ENCODE measurements at regions of chr7 and their contacts with region 1.

Region 1: GRCh38 chr7:21253740-21254687 is 173.9 kb upstream of the SP4 start:
- DNase-seq: no peak
- H3K4me3 ChIP-seq: no peak overlapping the region
- CTCF ChIP-seq: peak; percentile 47

Region 2: DNA sequence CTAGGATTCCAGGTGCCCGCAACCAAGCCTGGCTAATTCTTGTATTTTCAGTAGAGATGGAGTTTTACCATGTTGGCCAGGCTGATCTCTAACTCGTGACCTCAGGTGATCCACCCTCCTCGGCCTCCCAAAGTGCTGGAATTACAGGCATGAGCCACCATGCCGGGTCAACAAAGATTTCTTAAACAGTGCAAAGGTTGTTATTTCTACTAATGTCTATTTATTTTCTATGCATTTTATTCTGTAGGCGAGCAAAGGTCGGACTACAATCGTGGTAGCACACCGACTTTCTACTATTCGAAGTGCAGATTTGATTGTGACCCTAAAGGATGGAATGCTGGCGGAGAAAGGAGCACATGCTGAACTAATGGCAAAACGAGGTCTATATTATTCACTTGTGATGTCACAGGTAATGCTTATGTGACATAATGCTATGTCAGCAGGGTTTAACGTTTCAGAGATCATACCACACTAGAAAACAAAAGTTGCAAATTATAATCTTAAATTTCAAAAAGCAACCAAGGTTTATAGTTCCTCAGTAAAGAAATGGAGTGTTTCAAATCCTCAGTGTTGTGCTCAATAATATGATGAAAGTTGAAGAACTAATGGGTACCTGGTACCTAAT is 572.6 kb before region 1 on chr7:
- CTCF ChIA-PET with region 1: no interaction called
- POLR2A ChIA-PET with region 1: no interaction called
- DNase-seq: no peak
- H3K4me3 ChIP-seq: no peak overlapping the region
- CTCF ChIP-seq: no peak

Region 3: DNA sequence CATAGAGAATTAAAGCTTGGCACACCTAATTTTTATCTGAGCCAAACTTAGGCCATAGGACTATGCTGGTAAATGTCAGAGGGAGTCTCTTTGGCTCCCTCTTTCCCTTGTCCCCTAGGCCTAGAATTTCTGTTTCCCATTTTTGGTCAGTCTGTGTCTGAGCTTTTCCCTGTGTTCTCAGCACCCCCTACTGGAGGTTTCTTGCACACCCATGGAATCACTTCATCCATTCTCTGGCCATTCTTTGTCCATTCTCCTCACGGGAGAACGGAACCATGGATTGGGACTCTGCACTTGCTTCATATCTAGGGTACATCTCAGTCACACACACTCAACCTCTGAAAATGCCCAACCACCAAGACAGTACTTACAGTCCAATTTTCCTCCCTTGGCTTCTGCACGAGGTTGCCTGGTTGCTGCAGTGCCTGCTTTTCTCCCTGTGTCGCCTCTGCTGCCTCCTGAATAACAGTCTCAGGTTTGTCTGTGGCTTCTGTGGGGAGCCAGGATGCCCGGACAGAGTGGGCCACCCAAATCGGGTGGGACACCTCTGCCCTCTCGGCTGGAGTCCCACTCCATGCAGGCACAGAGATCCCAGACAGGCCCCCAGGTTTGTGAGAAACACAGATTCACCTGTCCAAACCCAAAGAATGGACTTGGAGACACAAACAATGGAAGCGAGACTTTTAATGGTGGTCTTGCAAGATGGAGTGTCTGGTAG is 253.8 kb after region 1 on chr7:
- CTCF ChIA-PET with region 1: interaction called, 27 read pairs
- POLR2A ChIA-PET with region 1: no interaction called
- DNase-seq: no peak
- H3K4me3 ChIP-seq: no peak overlapping the region
- CTCF ChIP-seq: peak; percentile 65

Region 4: GRCh38 chr7:22001345-22002004 is 747.5 kb after region 1 on chr7:
- CTCF ChIA-PET with region 1: interaction called, 24 read pairs
- POLR2A ChIA-PET with region 1: no interaction called
- DNase-seq: peak; percentile 53
- H3K4me3 ChIP-seq: no peak overlapping the region
- CTCF ChIP-seq: peak; percentile 54

Region 5: GRCh38 chr7:22082886-22083703 is 829.1 kb after region 1 on chr7:
- CTCF ChIA-PET with region 1: interaction called, 27 read pairs
- POLR2A ChIA-PET with region 1: no interaction called
- DNase-seq: no peak
- H3K4me3 ChIP-seq: peak overlapping the region; percentile 75
- CTCF ChIP-seq: peak; percentile 98

Measured in AG04449 (cell line).